B cell (primary cell): ENCODE measurements at regions of chr5 and their contacts with region 1.

Region 1: DNA sequence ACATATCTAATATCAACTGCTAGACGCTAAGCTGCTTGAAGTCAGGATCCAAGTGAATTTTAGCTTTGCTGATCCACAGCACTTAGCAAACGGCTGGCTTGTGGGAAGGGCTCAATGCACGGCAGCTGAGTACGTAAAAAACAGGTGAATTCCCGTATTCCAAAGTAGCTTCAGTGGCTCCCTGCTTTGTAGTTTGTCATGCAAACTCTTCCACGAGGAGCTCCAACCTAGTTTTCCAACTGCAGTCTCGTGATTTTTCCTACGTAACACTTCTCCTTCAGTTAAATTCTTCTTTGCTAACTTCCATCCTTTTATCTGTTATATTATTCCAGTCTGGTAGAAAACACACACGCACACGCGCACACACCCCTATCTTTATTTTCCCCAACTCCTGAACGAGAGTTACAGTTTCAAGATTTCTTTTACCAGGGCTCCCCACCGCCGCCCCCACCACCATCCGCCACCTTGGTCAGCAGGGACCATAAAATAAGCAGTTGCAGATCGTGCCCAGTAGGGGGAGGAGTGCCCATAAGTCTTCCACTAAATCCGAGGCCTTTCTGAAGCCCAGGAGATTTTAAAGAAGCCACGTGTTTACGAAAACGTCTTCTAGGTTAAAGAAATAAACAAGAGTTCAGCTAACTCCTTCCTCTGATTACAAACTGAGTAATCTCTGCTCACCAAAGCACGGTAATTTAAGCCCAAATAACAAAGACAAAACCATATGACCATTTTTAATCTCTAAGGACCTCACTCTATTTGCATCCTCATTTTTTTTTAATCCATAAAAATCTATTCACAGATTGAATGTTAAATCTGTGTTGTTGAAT is 34.8 kb upstream of the TRIO start:
- DNase-seq: peak; percentile 83
- ATAC-seq: peak; percentile 95
- H3K4me3 ChIP-seq: peak overlapping the region in 3 of 5 experiments; percentile 5 to 22 (median 17)
- H3K4me3 Mint-ChIP-seq: peak overlapping the region; percentile 77
- H3K27ac ChIP-seq: no peak overlapping the region
- H3K27ac Mint-ChIP-seq: peak overlapping the region; percentile 11
- H3K4me1 ChIP-seq: peaks cover 20 to 24% of the 10 kb centered on the region in 2 donors
- H3K4me1 Mint-ChIP-seq: peaks cover 39% of the 10 kb centered on the region
- H3K27me3 ChIP-seq: no peaks in the 10 kb centered on the region
- H3K27me3 Mint-ChIP-seq: no peaks in the 10 kb centered on the region
- CTCF ChIP-seq: peak; percentile 81

Region 2: DNA sequence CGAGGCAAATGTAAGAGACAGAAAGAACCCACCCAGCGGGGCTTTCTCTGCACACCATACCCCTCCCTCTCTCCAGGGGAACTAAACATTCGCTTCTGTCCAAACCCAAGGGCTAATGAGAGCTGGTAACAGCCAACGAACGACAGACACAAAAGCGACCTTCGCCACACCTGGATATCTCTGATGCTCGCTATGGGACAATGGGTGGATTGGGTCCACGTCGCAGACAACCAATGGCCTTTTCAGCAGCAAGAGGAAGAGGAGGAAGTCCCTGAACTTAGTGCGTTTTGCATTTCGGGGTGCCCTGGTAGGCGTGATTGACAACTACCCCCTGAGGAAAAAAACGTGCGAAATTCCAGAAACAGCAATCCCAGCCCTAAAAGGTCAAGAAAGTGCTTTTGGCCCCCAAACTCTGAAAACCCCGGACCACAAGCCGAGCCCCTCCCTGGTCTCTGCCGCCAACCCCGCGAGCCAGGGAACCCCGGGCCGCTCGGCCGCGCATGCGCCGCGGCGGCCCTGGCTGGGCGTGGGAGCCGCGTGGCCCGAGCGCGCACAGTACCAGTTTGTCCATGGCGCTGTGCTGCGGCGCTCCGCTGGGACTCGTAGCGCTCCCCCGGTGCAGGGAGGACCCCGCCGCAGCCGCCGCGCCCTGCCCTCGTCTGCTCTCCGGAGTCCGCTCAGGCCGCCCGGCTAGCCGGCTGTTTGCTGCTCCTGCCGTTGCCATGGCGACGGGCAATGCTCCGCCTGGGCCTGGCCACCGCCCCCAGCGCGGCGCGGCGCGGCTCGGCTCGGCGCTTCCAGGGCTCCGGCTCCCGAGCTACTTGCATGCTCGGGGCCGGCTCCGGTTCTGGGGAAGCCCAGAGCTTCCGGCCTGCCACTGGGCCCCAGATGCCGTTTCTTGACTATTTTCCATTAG is 97.0 kb before region 1 on chr5:
- CTCF ChIA-PET with region 1: interaction called, 5 read pairs
- POLR2A ChIA-PET with region 1: interaction called, 7 read pairs
- intact Hi-C with region 1: loop called (anchors 5 kb)
- DNase-seq: peak; percentile 85
- ATAC-seq: peak; percentile 87
- H3K4me3 ChIP-seq: peak overlapping the region; percentile 61 to 81 (median 72)
- H3K4me3 Mint-ChIP-seq: peak overlapping the region; percentile 91
- H3K27ac ChIP-seq: peak overlapping the region in 1 of 2 donors; percentile 14
- H3K27ac Mint-ChIP-seq: peak overlapping the region; percentile 60
- H3K4me1 ChIP-seq: peaks cover 5 to 8% of the 10 kb centered on the region in 2 donors
- H3K4me1 Mint-ChIP-seq: peaks cover 9% of the 10 kb centered on the region
- H3K27me3 ChIP-seq: peaks cover 0 to 16% (median 4%) of the 10 kb centered on the region in 4 experiments
- H3K27me3 Mint-ChIP-seq: peaks cover 28% of the 10 kb centered on the region
- CTCF ChIP-seq: no peak

Region 3: GRCh38 chr5:14208071-14209021 is 100.0 kb after region 1 on chr5:
- CTCF ChIA-PET with region 1: interaction called, 17 read pairs
- POLR2A ChIA-PET with region 1: no interaction called
- intact Hi-C with region 1: loop called (anchors 2 kb)
- DNase-seq: peak; percentile 51
- ATAC-seq: peak; percentile 25
- H3K4me3 ChIP-seq: peak overlapping the region in 2 of 5 experiments; percentile 0 to 9
- H3K4me3 Mint-ChIP-seq: peak overlapping the region; percentile 74
- H3K27ac ChIP-seq: peak overlapping the region; percentile 80 to 94
- H3K27ac Mint-ChIP-seq: peak overlapping the region; percentile 93
- H3K4me1 ChIP-seq: peaks cover 84 to 88% of the 10 kb centered on the region in 2 donors
- H3K4me1 Mint-ChIP-seq: peaks cover 85% of the 10 kb centered on the region
- H3K27me3 ChIP-seq: no peaks in the 10 kb centered on the region
- H3K27me3 Mint-ChIP-seq: no peaks in the 10 kb centered on the region
- CTCF ChIP-seq: no peak

Region 4: GRCh38 chr5:14270209-14270702 is 161.9 kb after region 1 on chr5:
- CTCF ChIA-PET with region 1: interaction called, 93 read pairs
- POLR2A ChIA-PET with region 1: interaction called, 3 read pairs
- intact Hi-C with region 1: loop called (anchors 1 kb)
- DNase-seq: peak; percentile 70
- ATAC-seq: peak; percentile 65
- H3K4me3 ChIP-seq: no peak overlapping the region
- H3K4me3 Mint-ChIP-seq: no peak overlapping the region
- H3K27ac ChIP-seq: no peak overlapping the region
- H3K27ac Mint-ChIP-seq: no peak overlapping the region
- H3K4me1 ChIP-seq: peaks cover 7 to 8% of the 10 kb centered on the region in 2 donors
- H3K4me1 Mint-ChIP-seq: peaks cover 62% of the 10 kb centered on the region
- H3K27me3 ChIP-seq: no peaks in the 10 kb centered on the region
- H3K27me3 Mint-ChIP-seq: no peaks in the 10 kb centered on the region
- CTCF ChIP-seq: peak; percentile 87

Region 5: GRCh38 chr5:14286574-14287421 is 178.4 kb after region 1 on chr5:
- CTCF ChIA-PET with region 1: interaction called, 15 read pairs
- POLR2A ChIA-PET with region 1: no interaction called
- intact Hi-C with region 1: loop called (anchors 1 kb)
- DNase-seq: peak; percentile 84
- ATAC-seq: peak; percentile 94
- H3K4me3 ChIP-seq: no peak overlapping the region
- H3K4me3 Mint-ChIP-seq: peak overlapping the region; percentile 67
- H3K27ac ChIP-seq: peak overlapping the region; percentile 11 to 30
- H3K27ac Mint-ChIP-seq: peak overlapping the region; percentile 43
- H3K4me1 ChIP-seq: peaks cover 21 to 26% of the 10 kb centered on the region in 2 donors
- H3K4me1 Mint-ChIP-seq: peaks cover 32% of the 10 kb centered on the region
- H3K27me3 ChIP-seq: no peaks in the 10 kb centered on the region
- H3K27me3 Mint-ChIP-seq: no peaks in the 10 kb centered on the region
- CTCF ChIP-seq: no peak

Region 6: DNA sequence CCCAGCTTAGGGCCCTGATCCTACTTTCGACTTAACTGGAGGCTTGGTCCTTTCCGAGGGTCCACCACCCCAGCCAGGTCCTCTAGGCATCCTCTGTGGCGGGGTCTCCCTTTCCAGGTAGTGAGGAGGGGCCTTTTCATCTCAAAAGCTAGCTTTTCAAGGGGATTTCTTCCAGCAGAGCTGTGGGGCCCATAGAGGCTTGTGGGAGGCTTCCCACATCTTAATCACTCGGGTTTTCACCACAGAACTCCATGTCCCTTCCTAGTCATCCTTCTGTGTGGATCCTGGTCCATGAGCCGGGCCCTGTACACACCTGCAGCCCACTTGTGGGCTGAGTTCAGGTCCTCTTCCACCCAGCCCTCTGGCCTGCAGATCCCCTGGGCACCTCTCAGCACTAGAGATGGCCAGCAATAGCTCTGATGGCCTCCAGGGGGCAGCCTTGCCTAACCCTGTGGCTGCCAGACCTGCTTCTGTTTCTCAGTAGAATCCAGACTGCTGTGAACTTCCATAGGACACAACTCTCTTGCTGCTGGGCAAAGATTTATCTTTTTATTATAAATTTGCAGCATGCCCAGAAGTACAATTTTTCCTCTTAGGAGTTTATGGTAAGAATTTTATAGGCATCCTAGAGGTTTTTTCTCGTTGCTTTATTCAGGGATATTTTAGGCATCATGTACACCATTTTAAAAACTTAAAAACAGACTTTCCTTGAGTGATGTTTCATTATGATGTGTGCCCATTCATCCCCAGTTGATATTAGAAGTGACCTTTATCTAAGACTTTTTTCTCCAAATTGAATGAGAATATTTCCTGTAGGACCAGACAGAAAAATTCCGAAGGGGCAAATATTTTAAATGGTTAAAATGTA is 243.7 kb after region 1 on chr5:
- CTCF ChIA-PET with region 1: interaction called, 3 read pairs
- POLR2A ChIA-PET with region 1: no interaction called
- intact Hi-C with region 1: loop called (anchors 5 kb)
- DNase-seq: peak; percentile 72
- ATAC-seq: peak; percentile 93
- H3K4me3 ChIP-seq: no peak overlapping the region
- H3K4me3 Mint-ChIP-seq: no peak overlapping the region
- H3K27ac ChIP-seq: no peak overlapping the region
- H3K27ac Mint-ChIP-seq: peak overlapping the region; percentile 68
- H3K4me1 ChIP-seq: peaks cover 9 to 21% of the 10 kb centered on the region in 2 donors
- H3K4me1 Mint-ChIP-seq: peaks cover 32% of the 10 kb centered on the region
- H3K27me3 ChIP-seq: no peaks in the 10 kb centered on the region
- H3K27me3 Mint-ChIP-seq: no peaks in the 10 kb centered on the region
- CTCF ChIP-seq: peak; percentile 96